BJ (cell line): ENCODE measurements at regions of chr7 and their contacts with region 1.

Region 1: DNA sequence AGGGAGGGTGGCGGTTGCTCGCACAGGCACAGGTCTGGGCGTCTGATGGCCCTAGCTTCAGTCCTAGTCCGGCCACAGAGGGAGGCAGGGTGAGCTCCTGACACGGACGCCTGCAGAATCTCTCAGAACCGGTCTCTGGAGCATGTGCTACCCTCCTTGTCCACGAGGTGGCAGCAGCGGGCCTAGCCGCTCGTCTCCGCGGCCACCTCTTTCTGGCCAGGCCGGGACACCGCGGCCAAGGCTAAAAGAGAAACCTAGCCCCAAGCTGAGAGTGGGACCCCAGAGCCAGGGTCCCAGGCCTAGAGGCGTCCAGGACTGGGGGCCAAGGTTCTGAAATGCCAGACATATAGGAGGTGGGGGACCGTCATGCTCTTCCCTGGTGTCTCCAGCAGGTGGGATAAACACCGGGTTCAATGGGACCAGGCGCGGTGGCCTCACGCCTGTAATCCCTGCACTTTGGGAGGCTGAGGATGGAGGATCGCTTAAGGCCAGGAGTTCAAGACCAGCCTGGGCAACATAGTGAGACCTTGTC is 3.2 kb upstream of the LAT2 start:
- DNase-seq: no peak
- H3K4me3 ChIP-seq: no peak overlapping the region
- H3K27me3 ChIP-seq: no peaks in the 10 kb centered on the region
- CTCF ChIP-seq: peak; percentile 96

Region 2: GRCh38 chr7:73918926-73919693 is 287.5 kb before region 1 on chr7:
- CTCF ChIA-PET with region 1: no interaction called
- POLR2A ChIA-PET with region 1: no interaction called
- DNase-seq: no peak
- H3K4me3 ChIP-seq: no peak overlapping the region
- H3K27me3 ChIP-seq: no peaks in the 10 kb centered on the region
- CTCF ChIP-seq: no peak

Region 3: DNA sequence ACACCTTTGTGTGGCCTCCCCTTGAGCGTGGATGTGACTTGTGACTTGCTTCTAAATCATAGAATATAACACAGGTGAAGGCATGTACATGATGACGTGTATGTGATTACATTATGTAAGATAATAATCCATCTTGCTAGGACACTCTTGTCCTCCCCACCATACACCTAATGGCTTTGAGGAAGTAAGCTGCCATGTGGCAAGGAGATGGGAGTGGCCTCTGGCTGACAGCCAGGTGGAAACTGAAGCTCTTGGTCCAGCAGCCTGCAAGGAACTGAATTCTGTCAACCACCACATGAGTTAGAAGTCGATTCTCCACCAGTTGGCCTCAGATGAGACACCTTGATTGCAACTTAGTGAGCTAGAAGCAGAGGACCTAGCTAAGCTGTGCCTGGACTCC is 246.1 kb before region 1 on chr7:
- CTCF ChIA-PET with region 1: no interaction called
- POLR2A ChIA-PET with region 1: no interaction called
- DNase-seq: no peak
- H3K4me3 ChIP-seq: no peak overlapping the region
- H3K27me3 ChIP-seq: no peaks in the 10 kb centered on the region
- CTCF ChIP-seq: no peak

Region 4: DNA sequence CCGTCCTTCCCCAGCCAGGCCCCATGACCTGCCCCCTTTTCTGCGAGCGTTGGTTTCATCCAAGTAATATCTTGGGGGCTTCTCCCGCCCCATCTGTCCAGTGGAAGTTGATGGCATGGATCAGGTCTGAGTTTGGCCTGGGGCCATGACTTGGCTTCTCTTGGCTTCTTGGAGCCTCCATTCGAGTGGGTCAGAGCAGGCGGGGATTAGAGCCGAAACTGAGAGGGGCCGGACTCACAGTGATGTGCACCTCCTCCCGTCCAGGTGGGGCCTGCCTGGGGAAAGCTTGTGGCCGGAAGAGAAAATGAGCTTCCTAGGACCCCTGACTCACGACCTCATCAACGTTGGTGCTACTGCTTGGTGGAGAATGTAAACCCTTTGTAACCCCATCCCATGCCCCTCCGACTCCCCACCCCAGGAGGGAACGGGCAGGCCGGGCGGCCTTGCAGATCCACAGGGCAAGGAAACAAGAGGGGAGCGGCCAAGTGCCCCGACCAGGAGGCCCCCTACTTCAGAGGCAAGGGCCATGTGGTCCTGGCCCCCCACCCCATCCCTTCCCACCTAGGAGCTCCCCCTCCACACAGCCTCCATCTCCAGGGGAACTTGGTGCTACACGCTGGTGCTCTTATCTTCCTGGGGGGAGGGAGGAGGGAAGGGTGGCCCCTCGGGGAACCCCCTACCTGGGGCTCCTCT is 138.1 kb before region 1 on chr7:
- CTCF ChIA-PET with region 1: interaction called, 27 read pairs
- POLR2A ChIA-PET with region 1: no interaction called
- DNase-seq: no peak
- H3K4me3 ChIP-seq: no peak overlapping the region
- H3K27me3 ChIP-seq: no peaks in the 10 kb centered on the region
- CTCF ChIP-seq: no peak

Region 5: DNA sequence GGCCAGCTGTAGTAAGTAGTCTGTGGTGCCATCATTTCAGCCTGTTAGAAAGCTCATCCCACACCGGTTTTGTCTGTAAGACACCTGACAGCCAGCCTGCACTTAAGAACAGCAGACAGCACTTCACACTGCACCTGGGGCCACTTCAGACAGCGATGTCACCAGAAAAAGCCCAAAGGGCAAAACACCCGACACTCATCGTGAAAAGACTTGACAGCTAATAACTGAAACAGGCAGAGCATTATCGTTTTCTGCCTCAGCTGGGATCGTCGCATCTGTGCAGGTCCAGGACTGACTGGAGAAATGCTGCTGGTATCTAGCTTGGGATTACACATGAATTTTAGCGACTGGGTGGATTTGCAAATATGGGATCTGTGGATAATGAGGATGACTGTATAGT is 13.6 kb before region 1 on chr7:
- CTCF ChIA-PET with region 1: interaction called, 14 read pairs
- POLR2A ChIA-PET with region 1: no interaction called
- DNase-seq: no peak
- H3K4me3 ChIP-seq: no peak overlapping the region
- H3K27me3 ChIP-seq: no peaks in the 10 kb centered on the region
- CTCF ChIP-seq: no peak

Region 6: DNA sequence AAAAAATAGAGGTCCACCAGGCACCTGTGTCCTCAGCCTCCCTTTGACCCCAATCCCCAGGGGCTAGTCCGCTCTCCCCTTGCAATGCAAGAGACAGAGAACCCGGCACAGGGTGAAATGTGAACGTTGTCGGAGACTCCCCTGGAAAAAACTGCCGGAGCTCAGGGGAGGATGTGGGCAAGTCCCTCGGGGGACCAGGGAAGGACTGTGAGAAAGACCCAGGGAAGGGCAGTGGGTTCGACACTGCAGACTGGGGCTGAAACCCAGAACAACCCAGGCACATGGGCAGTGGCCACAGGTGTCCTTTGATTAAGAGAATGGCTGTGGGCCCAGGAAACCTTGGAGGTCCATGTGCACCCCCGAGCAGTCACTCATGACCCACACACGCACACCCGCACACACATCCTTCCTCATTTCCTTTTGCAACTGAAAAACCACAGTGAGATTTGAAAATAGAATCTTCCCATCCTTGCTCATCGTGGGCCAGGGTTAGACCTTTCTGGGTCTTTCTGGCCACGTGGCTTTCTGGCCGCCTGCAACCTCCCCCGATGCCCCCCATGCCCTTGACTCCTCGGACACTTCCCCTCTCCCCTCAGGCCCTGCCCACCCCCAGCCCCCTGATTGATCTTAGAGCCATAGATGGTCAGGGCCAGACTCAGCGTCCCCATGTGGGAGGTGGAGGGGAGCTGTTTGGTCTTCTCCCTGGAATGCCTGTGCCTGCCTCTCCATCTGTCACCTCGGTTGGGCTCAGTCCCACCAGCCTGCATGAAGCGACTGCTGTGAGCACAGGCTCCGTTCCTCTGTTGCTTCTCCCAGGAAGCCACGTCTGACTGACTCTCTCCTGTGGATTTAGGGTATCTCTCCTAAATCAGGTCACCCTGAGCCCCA is 11.0 kb after region 1 on chr7:
- CTCF ChIA-PET with region 1: interaction called, 19 read pairs
- POLR2A ChIA-PET with region 1: no interaction called
- DNase-seq: no peak
- H3K4me3 ChIP-seq: no peak overlapping the region
- H3K27me3 ChIP-seq: no peaks in the 10 kb centered on the region
- CTCF ChIP-seq: no peak

Region 7: GRCh38 chr7:74349621-74350020 is 143.0 kb after region 1 on chr7:
- CTCF ChIA-PET with region 1: no interaction called
- POLR2A ChIA-PET with region 1: no interaction called
- DNase-seq: no peak
- H3K4me3 ChIP-seq: no peak overlapping the region
- H3K27me3 ChIP-seq: no peaks in the 10 kb centered on the region
- CTCF ChIP-seq: no peak